Dendritic cell treated with granulocyte-macrophage colony-stimulating factor and Interleukin-4, amounts not matched to agents 40 ng/mL and 50 ng/mL, for 4 days (primary cell): ENCODE measurements at regions of chr4 and their contacts with region 1.

Region 1: GRCh38 chr4:77203380-77204197 is 46.6 kb downstream of the CCNG2 start:
- H3K4me3 Mint-ChIP-seq: no peak overlapping the region
- H3K27ac Mint-ChIP-seq: peak overlapping the region; percentile 32
- H3K4me1 Mint-ChIP-seq: peaks cover 15% of the 10 kb centered on the region
- H3K27me3 Mint-ChIP-seq: no peaks in the 10 kb centered on the region

Region 2: DNA sequence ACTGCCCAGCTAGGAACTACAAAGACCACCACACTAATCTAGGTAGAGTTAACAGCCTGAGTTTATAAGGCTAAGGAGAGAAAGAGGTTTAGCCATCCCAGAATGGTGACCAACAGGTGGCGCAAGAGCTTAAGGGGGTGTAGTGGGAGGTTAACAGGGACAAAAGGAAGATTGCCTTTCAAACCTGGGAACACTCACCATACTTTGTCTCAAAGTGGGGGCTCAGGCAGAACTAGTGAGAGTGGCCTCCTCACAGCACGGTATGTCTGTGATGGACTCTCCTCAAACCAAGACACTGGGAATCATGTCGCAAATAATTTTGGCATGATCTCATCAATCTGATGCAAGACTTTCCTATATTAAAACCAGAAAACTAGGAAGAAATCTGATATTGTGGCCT is 151.2 kb before region 1 on chr4:
- intact Hi-C with region 1: loop called (anchors 2 kb)
- H3K4me3 Mint-ChIP-seq: no peak overlapping the region
- H3K27ac Mint-ChIP-seq: no peak overlapping the region
- H3K4me1 Mint-ChIP-seq: no peaks in the 10 kb centered on the region
- H3K27me3 Mint-ChIP-seq: no peaks in the 10 kb centered on the region

Region 3: DNA sequence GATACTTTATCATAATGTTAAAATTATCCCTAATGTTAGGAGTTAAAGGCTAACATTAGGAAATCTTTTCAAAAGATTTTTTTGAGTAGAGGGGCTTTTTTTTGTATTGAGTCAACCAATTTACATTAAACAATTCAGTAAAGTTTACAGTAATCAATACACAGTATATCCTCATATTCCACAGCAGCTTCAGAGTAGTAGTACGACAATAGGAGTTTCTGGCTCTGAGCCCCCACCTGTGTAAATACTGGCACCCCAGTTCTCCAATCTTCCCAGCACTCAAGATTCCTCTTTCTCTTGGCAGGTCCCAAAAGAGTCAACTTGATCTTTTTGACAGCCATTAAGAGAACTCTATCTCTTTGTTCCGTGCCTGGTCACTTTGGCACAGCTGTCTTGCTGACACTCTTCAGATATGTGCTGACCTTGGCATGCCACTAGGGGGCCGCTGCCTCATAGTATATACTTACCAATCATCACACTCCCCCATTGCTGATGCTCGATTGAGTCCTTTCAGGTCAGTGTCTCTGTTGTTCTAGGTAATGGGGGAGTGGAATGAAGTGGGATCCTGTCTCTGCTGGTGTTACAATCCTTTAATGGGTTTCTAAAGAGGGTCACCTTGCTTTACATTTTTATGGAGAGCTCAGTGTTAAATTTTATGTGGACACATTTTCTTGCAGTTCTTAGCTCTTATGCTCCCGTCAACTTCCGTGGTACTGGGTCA is 108.3 kb before region 1 on chr4:
- intact Hi-C with region 1: loop called (anchors 1 kb)
- H3K4me3 Mint-ChIP-seq: no peak overlapping the region
- H3K27ac Mint-ChIP-seq: no peak overlapping the region
- H3K4me1 Mint-ChIP-seq: peaks cover 35% of the 10 kb centered on the region
- H3K27me3 Mint-ChIP-seq: no peaks in the 10 kb centered on the region

Region 4: DNA sequence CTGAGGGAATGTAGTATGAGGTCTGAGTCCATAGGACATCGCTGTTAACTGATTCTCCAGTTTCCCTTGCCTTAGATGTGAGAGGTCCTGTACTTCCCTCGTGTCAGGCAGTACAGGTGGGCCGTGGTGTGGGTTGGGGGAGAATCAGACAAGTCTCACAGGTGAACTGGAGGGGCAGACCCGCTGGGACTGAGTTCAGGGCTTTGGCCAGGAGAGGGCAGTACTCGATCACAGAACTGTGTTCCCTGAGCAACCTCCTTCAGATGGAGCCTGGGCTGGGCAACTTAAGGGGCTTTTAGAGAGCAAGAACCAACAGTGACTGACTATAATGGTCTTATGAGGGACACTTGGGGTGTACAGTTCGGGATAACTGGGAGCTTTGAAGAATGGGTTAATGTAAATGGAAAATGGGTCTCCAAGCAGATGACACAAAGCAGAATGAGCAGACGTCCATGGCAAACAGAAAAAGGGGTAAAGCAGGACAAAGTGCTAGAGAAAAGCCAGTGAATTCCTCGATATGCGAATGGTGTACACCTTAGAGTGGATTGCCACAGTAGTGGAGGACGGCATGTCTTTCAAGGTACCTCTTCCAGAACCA is 37.0 kb after region 1 on chr4:
- intact Hi-C with region 1: no loop called
- H3K4me3 Mint-ChIP-seq: no peak overlapping the region
- H3K27ac Mint-ChIP-seq: no peak overlapping the region
- H3K4me1 Mint-ChIP-seq: no peaks in the 10 kb centered on the region
- H3K27me3 Mint-ChIP-seq: peaks cover 2% of the 10 kb centered on the region

Region 5: GRCh38 chr4:77399831-77400230 is 196.2 kb after region 1 on chr4:
- intact Hi-C with region 1: no loop called
- H3K4me3 Mint-ChIP-seq: no peak overlapping the region
- H3K27ac Mint-ChIP-seq: no peak overlapping the region
- H3K4me1 Mint-ChIP-seq: no peaks in the 10 kb centered on the region
- H3K27me3 Mint-ChIP-seq: no peaks in the 10 kb centered on the region